AG04450 (cell line): ENCODE measurements at regions of chr15 and their contacts with region 1.

Region 1: GRCh38 chr15:76196269-76197231 is 114.7 kb downstream of the ETFA start:
- DNase-seq: peak; percentile 75
- H3K4me3 ChIP-seq: no peak overlapping the region
- H3K27ac ChIP-seq: peak overlapping the region; percentile 47
- H3K27me3 ChIP-seq: peaks cover 2% of the 10 kb centered on the region
- CTCF ChIP-seq: no peak

Region 2: DNA sequence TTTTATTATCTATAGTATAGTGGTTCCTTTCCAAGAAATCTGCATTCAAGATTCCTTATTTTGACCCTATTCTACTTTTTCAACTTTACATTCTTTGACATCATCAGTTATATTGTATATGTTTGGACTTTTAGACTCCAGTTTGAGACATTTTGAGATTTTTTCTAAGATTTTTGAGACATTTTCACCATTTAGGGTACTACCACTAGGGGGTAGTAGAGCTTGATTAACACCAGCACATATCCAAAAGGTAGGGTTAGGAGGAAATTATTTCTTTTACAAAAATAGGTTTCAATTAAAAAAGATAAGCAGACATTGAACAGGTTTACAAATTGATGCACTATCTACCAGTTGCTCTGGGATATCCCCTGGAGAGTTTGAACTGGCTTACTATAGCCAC is 446.1 kb after region 1 on chr15:
- CTCF ChIA-PET with region 1: no interaction called
- POLR2A ChIA-PET with region 1: interaction called, 13 read pairs
- DNase-seq: no peak
- H3K4me3 ChIP-seq: no peak overlapping the region
- H3K27ac ChIP-seq: no peak overlapping the region
- H3K27me3 ChIP-seq: no peaks in the 10 kb centered on the region
- CTCF ChIP-seq: peak; percentile 26